T-cell (primary cell): ENCODE measurements at regions of chr22 and their contacts with region 1.

Region 1: DNA sequence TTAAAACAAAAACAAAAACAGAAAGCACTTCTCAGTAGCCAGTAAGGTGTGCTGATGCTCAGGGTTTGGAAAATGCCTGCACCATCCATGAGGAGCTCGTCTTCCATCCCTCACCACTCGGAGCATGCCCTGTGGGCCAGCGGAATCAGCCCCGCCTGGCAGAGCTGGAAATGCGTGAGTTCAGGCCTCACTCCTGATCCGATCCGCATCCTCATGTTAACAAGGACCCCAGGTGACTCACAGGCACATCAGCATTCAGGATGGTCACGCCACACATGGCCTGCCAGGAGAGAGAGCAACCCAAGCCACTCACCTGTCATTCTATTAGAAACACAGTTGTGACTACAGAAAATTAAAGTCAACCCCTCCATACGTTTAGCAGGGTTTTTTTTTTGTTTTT is 188.5 kb downstream of the MPPED1 start:
- DNase-seq: no peak
- ATAC-seq: no peak
- H3K4me3 ChIP-seq: no peak overlapping the region
- H3K4me3 Mint-ChIP-seq: no peak overlapping the region
- H3K27ac ChIP-seq: no peak overlapping the region
- H3K27ac Mint-ChIP-seq: no peak overlapping the region
- H3K4me1 ChIP-seq: no peaks in the 10 kb centered on the region
- H3K4me1 Mint-ChIP-seq: no peaks in the 10 kb centered on the region
- H3K27me3 ChIP-seq: no peaks in the 10 kb centered on the region
- H3K27me3 Mint-ChIP-seq: peaks cover 2 to 4% of the 10 kb centered on the region in 2 donors

Region 2: DNA sequence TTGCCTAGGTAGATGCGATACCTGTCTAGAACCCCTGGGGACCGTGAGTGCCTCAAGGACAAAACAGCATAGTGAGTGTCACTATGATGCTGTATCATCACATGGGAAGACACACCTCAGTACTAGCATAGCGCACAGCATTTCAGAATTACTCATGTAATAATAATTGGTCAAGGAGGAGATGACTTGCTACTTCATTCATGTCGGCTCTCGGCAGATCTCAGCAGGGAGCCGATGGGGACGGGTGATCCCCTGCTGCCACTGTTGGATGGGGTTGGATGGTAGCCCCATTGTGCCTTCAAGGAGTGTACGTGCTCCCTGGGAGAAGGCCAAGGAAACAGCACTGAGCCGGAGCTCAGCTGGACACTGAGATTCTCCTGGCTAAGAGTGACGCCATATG is 25.0 kb after region 1 on chr22:
- CTCF ChIA-PET with region 1: no interaction called
- POLR2A ChIA-PET with region 1: interaction called in 1 of 2 experiments, 10 read pairs
- DNase-seq: no peak
- ATAC-seq: no peak
- H3K4me3 ChIP-seq: no peak overlapping the region
- H3K4me3 Mint-ChIP-seq: no peak overlapping the region
- H3K27ac ChIP-seq: no peak overlapping the region
- H3K27ac Mint-ChIP-seq: no peak overlapping the region
- H3K4me1 ChIP-seq: no peaks in the 10 kb centered on the region
- H3K4me1 Mint-ChIP-seq: no peaks in the 10 kb centered on the region
- H3K27me3 ChIP-seq: peaks cover 0 to 8% of the 10 kb centered on the region in 2 experiments
- H3K27me3 Mint-ChIP-seq: peaks cover 5% of the 10 kb centered on the region in 2 donors